Activated naive CD4-positive, alpha-beta T cell treated with anti-CD3 and anti-CD28 coated beads for 36 hours (primary cell): ENCODE measurements at regions of chr2 and their contacts with region 1.

Region 1: DNA sequence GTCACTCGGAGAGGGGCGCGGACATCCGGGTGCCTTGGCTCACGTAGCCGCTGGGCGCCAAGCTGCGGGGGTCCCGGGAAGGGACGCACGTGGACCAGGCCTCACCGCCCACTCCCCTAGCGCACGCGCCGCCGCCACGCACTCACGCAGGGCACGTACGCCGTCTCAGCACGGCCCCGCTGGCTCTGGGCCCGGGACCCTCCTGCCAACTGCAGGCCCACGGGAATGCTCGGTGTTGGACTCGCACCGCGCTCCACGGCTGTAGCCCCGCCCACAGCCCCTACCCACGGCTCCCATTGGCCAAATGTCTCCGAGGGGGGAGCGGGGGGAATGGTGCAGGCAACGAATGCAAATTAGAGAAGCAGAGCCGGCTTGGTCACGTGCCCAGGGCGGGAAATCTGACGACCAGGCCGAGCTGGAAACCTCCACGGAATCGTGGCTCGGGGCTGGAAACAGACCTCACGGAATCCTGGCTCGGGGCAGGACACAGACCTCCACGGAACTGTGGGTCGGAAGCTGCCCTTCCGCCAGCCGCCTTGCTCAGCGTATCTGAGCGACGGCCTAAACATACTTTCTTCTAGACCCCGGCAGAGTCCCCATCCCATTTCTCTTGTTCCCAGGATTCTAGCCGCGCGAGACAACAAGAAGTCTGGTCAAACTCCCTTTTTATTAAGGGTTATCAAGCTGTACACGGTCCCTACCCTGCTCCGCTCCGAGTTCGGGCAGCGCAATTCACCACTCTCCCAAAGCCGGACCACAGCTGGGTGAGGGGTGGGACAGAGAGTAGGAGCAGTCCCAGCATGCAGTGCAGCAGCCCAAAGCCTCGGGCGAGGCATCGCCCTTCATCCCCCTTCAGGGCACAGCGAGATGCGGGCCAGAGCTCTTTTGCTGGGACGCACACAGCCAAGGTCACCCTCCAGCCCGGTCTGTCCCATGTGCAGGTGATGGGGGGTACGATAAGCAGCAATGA is at the start of gene ABCB6:
- DNase-seq: peak; percentile 89
- H3K4me3 Mint-ChIP-seq: peak within 1 kb of the TSS; percentile 78
- H3K27ac Mint-ChIP-seq: peak within 1 kb of the TSS; percentile 56
- H3K4me1 Mint-ChIP-seq: peaks cover 25% of the 10 kb centered on the region
- H3K27me3 Mint-ChIP-seq: no peaks in the 10 kb centered on the region
- total RNA-seq, gene ABCB6: 7.0 to 7.5 TPM

Region 2: DNA sequence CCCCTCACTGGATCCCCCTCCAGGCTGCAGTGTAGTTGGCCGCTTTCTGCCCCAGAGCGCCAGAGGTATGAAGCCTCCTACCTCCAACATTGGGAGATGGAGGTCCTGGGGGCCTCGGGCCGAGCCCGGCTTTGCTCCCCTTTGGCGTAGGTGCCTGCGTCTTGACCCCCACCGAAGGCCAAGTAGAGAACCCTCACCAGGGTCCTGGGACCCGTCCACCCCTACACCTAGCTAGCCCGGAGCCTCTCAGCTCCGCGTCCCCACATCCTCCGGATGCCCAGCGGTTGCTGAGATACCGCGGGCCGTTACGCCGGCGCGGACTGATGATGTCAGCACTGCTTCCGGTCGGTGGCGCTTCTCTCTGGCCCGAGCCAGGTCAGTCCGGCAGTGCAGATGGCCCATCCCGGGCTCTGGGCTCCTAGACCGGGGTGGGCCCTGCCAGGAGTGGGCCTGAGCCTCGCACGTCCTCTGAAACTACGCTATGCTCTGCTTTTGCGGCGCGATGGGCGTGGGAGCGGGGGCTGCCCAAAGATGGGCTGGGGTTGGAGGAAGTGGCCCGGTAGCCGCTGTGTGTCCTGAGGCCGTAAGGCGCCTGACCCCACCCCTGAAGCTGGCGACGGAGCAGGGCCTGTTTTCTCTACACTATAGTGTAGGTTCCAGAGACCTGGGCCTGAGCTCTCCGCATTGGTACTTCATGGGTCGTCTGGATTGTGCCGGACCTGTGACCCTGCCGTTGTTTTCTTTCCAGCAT is 26.3 kb after region 1 on chr2 and contains the starts of genes GLB1L and STK16:
- CTCF ChIA-PET with region 1: interaction called, 4 read pairs
- intact Hi-C with region 1: loop called (anchors 1 kb)
- DNase-seq: peak; percentile 92
- H3K4me3 Mint-ChIP-seq: peak within 1 kb of the TSS; percentile 98
- H3K27ac Mint-ChIP-seq: peak within 1 kb of the TSS; percentile 99
- H3K4me1 Mint-ChIP-seq: peaks cover 57% of the 10 kb centered on the region
- H3K27me3 Mint-ChIP-seq: no peaks in the 10 kb centered on the region
- total RNA-seq, gene GLB1L: 2.1 TPM
- total RNA-seq, gene STK16: 33.7 to 35.5 TPM